Calu3 (cell line): ENCODE measurements at regions of chr18 and their contacts with region 1.

Region 1: DNA sequence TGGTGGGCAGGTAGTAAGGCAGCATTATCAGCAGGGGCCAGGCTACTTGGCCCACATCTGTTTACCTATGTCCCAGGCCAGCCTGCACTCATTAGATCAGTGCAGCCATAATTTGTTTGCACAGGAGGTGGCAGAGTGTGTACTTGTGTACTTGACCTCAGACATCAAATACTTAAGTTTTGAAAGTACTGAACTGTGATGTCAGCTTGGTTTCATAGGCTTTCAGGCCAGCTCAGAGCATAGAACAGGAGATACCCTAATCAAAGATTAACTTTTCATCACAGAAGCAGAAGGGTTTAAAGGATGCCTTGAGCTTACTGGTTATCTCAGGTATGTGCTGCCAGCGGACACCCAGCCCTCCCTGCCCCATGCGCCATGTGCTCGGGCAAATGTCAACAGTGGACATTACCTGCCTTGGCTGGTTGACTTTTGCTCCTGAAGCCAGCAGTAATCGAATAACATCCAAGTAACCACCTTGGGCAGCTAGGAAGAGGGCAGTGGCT is 33.2 kb downstream of the ANKRD29 start:
- DNase-seq: peak; percentile 61
- H3K4me3 Mint-ChIP-seq: no peak overlapping the region
- H3K27ac Mint-ChIP-seq: peak overlapping the region; percentile 86
- H3K4me1 Mint-ChIP-seq: peaks cover 50% of the 10 kb centered on the region
- H3K27me3 Mint-ChIP-seq: no peaks in the 10 kb centered on the region
- CTCF ChIP-seq: peak; percentile 22

Region 2: GRCh38 chr18:22286621-22287020 is 1342.9 kb before region 1 on chr18:
- CTCF ChIA-PET with region 1: no interaction called
- intact Hi-C with region 1: no loop called
- DNase-seq: peak; percentile 85
- H3K4me3 Mint-ChIP-seq: peak overlapping the region; percentile 5
- H3K27ac Mint-ChIP-seq: peak overlapping the region; percentile 83
- H3K4me1 Mint-ChIP-seq: peaks cover 49% of the 10 kb centered on the region
- H3K27me3 Mint-ChIP-seq: no peaks in the 10 kb centered on the region
- CTCF ChIP-seq: no peak

Region 3: GRCh38 chr18:23612435-23613085 is 16.9 kb before region 1 on chr18:
- CTCF ChIA-PET with region 1: interaction called, 16 read pairs
- intact Hi-C with region 1: no loop called
- DNase-seq: peak; percentile 34
- H3K4me3 Mint-ChIP-seq: peak overlapping the region; percentile 9
- H3K27ac Mint-ChIP-seq: peak overlapping the region; percentile 19
- H3K4me1 Mint-ChIP-seq: peaks cover 40% of the 10 kb centered on the region
- H3K27me3 Mint-ChIP-seq: no peaks in the 10 kb centered on the region
- CTCF ChIP-seq: no peak

Region 4: GRCh38 chr18:23650968-23651927 is 21.8 kb after region 1 on chr18:
- CTCF ChIA-PET with region 1: interaction called, 3 read pairs
- intact Hi-C with region 1: loop called (anchors 1 kb)
- DNase-seq: peak; percentile 30
- H3K4me3 Mint-ChIP-seq: no peak overlapping the region
- H3K27ac Mint-ChIP-seq: peak overlapping the region; percentile 37
- H3K4me1 Mint-ChIP-seq: peaks cover 45% of the 10 kb centered on the region
- H3K27me3 Mint-ChIP-seq: no peaks in the 10 kb centered on the region
- CTCF ChIP-seq: no peak

Region 5: DNA sequence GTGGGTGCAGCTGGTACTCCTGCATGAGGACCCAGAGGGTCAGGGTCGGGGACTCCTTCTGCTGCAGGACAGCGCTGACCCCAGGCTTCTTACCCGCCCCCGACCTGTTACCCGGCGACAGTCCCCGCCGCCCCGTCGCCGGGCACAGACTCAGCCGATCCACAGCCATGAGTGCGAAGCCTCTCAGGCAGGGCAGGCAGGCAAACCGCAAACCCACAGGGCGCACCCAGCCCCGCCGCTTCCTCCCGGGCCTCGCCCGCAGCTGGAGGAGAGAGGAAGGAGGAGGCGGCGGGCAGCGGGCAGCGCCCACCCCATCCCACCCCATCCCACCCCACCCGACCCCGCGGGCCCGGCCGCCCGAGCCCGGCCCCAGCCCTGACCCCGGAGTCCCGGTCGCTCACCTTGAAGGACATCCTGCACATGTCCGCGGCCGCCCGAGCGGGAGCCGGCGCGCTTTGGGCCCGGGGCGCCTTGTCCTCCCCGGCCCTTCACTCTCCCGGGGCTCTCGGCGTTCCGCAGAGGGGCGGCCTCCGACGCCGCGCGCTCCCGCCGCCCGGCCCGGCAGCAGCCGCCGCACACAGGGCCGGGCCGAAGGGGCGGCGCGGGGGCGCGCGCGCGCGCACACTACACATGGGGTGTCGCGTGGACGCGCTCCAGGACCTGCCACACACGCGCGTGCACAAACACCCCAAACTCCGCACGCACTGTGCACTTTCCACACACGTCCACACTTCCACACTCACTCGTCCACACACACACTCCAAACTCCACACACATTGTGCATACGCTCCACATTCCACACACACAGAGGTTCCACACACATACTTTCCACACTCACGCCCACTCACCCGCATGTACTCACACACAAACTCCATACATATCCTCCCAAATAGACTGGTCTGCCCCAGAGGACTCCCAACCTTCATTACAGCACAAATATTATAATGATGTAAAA is 33.1 kb after region 1 on chr18 and contains the start of gene ANKRD29:
- CTCF ChIA-PET with region 1: interaction called, 5 read pairs
- intact Hi-C with region 1: loop called (anchors 2 kb)
- DNase-seq: peak; percentile 73
- H3K4me3 Mint-ChIP-seq: peak within 1 kb of the TSS; percentile 79
- H3K27ac Mint-ChIP-seq: peak within 1 kb of the TSS; percentile 38
- H3K4me1 Mint-ChIP-seq: peaks cover 18% of the 10 kb centered on the region
- H3K27me3 Mint-ChIP-seq: peaks cover 17% of the 10 kb centered on the region
- CTCF ChIP-seq: no peak
- total RNA-seq, gene ANKRD29: 6.9 and 7.8 TPM in 2 replicates

Region 6: DNA sequence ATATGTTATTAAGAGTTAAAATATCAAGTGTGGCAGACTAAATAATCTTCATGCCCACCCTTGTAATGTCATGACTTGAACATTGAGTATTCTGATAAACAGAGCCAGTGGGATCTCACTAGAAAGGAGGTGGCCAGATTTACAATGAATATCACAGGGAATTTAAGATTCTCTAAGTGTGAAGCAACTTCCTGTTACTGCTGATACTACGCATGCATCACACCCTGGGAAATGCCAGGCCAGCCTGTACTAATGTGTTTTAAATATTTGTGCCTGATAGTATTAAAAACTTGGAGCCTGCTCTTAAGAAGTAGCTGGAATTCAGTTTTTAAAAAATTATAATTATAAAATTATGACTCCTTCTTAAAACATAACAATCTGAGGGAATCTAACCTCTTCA is 208.1 kb after region 1 on chr18:
- CTCF ChIA-PET with region 1: no interaction called
- intact Hi-C with region 1: no loop called
- DNase-seq: no peak
- H3K4me3 Mint-ChIP-seq: no peak overlapping the region
- H3K27ac Mint-ChIP-seq: no peak overlapping the region
- H3K4me1 Mint-ChIP-seq: no peaks in the 10 kb centered on the region
- H3K27me3 Mint-ChIP-seq: no peaks in the 10 kb centered on the region
- CTCF ChIP-seq: no peak